Dendritic cell treated with granulocyte-macrophage colony-stimulating factor and Interleukin-4, amounts not matched to agents 40 ng/mL and 50 ng/mL, for 4 days (primary cell): ENCODE measurements at regions of chr1 and their contacts with region 1.

Region 1: DNA sequence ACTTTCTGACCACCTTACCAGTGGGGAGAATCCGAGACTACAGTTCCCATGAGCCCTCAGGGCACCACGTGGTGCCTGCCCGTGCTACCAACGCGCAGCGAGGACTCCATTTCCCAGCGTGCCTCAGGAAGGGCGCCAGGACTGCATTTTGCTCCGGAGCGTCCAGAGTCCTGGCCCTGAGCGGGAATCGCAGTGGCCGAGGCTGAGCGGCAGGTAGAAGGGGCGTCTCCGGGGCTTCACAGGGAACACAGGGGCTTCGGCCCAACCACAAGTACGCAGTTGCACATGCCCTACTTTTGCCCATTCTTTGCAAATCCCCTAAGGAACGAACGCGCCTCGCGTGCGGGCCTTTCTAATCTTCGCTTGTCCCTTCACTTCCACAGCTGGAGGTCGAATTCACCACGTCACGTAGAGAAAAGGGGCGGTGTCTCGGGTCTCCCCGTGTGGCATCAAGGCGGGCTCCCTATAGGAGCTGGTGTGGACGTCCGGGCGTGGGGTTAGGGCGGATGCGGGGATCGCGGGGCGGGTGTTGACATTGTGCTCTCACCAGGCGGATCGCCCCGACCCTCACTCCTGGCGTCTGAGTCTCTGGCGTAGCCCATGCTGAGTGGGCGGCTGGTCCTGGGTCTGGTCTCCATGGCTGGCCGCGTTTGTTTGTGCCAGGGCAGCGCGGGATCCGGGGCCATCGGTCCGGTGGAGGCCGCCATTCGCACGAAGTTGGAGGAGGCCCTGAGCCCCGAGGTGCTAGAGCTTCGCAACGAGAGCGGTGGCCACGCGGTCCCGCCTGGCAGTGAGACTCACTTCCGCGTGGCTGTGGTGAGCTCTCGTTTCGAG is at the start of gene BOLA1:
- H3K4me3 Mint-ChIP-seq: peak within 1 kb of the TSS; percentile 80
- H3K27ac Mint-ChIP-seq: peak within 1 kb of the TSS; percentile 88
- H3K4me1 Mint-ChIP-seq: peaks cover 22% of the 10 kb centered on the region
- H3K27me3 Mint-ChIP-seq: no peaks in the 10 kb centered on the region

Region 2: DNA sequence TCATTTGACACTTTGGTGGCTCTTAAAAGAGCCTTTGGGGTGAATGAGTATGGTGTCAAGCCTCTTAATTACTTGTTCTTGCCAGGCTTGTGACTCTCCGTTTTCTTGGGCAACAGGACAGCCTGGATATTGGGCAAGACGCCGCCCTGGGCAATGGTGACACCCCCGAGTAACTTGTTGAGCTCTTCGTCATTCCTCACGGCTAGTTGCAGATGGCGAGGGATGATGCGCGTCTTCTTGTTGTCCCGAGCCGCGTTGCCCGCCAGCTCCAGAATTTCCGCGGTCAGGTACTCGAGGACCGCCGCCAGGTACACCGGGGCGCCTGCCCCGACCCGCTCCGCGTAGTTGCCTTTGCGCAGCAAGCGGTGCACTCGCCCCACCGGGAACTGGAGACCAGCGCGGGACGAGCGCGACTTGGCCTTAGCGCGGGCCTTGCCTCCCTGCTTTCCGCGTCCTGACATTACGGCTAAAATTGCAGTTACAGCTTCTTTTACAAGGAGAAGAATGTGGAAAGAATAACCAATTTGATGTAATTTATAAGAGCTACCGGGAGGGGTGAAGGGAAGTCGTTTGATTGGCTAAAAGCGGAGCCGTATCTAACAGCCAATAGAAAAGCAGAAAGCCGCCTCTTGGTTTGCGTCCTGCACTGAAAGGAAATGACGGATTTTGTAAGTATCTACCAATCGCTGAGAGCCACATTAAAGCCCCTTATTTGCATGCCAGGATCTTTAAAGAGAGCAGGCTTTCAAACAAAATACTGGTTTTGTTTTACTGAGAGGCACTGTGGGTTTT is 12.0 kb before region 1 on chr1:
- intact Hi-C with region 1: loop called (anchors 1 kb)
- H3K4me3 Mint-ChIP-seq: no peak overlapping the region
- H3K27ac Mint-ChIP-seq: no peak overlapping the region
- H3K4me1 Mint-ChIP-seq: peaks cover 16% of the 10 kb centered on the region
- H3K27me3 Mint-ChIP-seq: no peaks in the 10 kb centered on the region

Region 3: GRCh38 chr1:149927503-149928387 is 28.1 kb after region 1 on chr1 and contains the start of gene SF3B4:
- intact Hi-C with region 1: loop called (anchors 1 kb)
- H3K4me3 Mint-ChIP-seq: peak within 1 kb of the TSS; percentile 99
- H3K27ac Mint-ChIP-seq: peak within 1 kb of the TSS; percentile 89
- H3K4me1 Mint-ChIP-seq: peaks cover 82% of the 10 kb centered on the region
- H3K27me3 Mint-ChIP-seq: no peaks in the 10 kb centered on the region